CD4-positive, alpha-beta T cell (primary cell): ENCODE measurements at regions of chr11 and their contacts with region 1.

Region 1: GRCh38 chr11:11148104-11148509 is 204.9 kb downstream of the CSNK2A3 start:
- DNase-seq: peak in 13 of 14 experiments; percentile 27 to 73 (median 48)
- ATAC-seq: peak; percentile 13
- H3K4me3 ChIP-seq: no peak overlapping the region
- H3K4me3 Mint-ChIP-seq: peak overlapping the region; percentile 63
- H3K27ac ChIP-seq: peak overlapping the region in 1 of 2 donors; percentile 95
- H3K27ac Mint-ChIP-seq: peak overlapping the region; percentile 95
- H3K4me1 ChIP-seq: peaks cover 45% of the 10 kb centered on the region
- H3K4me1 Mint-ChIP-seq: peaks cover 74% of the 10 kb centered on the region
- H3K27me3 ChIP-seq: no peaks in the 10 kb centered on the region
- H3K27me3 Mint-ChIP-seq: no peaks in the 10 kb centered on the region
- CTCF ChIP-seq: no peak

Region 2: GRCh38 chr11:10866893-10867331 is 281.2 kb before region 1 on chr11:
- CTCF ChIA-PET with region 1: no interaction called
- POLR2A ChIA-PET with region 1: no interaction called
- intact Hi-C with region 1: loop called in 1 of 2 experiments (anchors 5 kb)
- DNase-seq: no peak
- ATAC-seq: no peak
- H3K4me3 ChIP-seq: no peak overlapping the region
- H3K4me3 Mint-ChIP-seq: no peak overlapping the region
- H3K27ac ChIP-seq: no peak overlapping the region
- H3K27ac Mint-ChIP-seq: no peak overlapping the region
- H3K4me1 ChIP-seq: no peaks in the 10 kb centered on the region
- H3K4me1 Mint-ChIP-seq: peaks cover 19% of the 10 kb centered on the region
- H3K27me3 ChIP-seq: no peaks in the 10 kb centered on the region
- H3K27me3 Mint-ChIP-seq: no peaks in the 10 kb centered on the region
- CTCF ChIP-seq: no peak

Region 3: GRCh38 chr11:11036848-11037732 is 111.0 kb before region 1 on chr11:
- CTCF ChIA-PET with region 1: interaction called, 15 read pairs
- POLR2A ChIA-PET with region 1: interaction called, 3 read pairs
- intact Hi-C with region 1: no loop called
- DNase-seq: peak in 8 of 14 experiments; percentile 11 to 86 (median 35)
- ATAC-seq: peak; percentile 93
- H3K4me3 ChIP-seq: no peak overlapping the region
- H3K4me3 Mint-ChIP-seq: no peak overlapping the region
- H3K27ac ChIP-seq: no peak overlapping the region
- H3K27ac Mint-ChIP-seq: peak overlapping the region; percentile 78
- H3K4me1 ChIP-seq: peaks cover 14% of the 10 kb centered on the region
- H3K4me1 Mint-ChIP-seq: peaks cover 22% of the 10 kb centered on the region
- H3K27me3 ChIP-seq: no peaks in the 10 kb centered on the region
- H3K27me3 Mint-ChIP-seq: no peaks in the 10 kb centered on the region
- CTCF ChIP-seq: peak; percentile 62

Region 4: DNA sequence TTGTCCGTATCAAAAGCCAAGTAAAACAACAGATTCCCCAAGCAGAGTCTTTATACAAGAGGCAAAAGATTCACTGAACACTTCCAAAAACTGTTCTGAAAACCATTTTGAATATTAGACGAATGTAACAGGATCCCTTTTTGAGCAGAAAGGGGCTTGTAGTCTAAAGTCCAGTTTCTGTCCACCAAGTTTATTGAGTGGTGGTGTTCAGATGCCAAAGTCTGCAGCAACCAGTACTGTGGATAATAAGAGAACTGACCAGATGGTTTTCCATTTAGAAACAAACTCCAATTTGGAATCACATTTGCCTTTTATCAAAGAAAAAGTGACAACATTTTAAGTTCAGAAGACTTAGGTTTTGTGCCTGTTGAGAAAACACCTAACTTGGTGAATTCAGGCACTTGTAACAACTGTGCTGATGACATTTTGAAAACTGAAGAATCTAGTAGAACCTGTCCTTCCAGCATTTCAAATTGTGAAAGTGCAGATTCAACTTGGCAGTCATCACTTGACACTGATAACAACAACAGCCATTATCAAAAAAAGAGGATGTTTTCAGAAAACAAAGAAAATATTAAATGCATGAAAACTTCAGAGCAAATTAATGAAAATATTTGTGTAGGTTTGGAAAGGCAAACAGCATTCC is 12.2 kb before region 1 on chr11:
- CTCF ChIA-PET with region 1: interaction called, 5 read pairs
- POLR2A ChIA-PET with region 1: interaction called, 38 read pairs
- intact Hi-C with region 1: no loop called
- DNase-seq: no peak
- ATAC-seq: no peak
- H3K4me3 ChIP-seq: no peak overlapping the region
- H3K4me3 Mint-ChIP-seq: no peak overlapping the region
- H3K27ac ChIP-seq: no peak overlapping the region
- H3K27ac Mint-ChIP-seq: no peak overlapping the region
- H3K4me1 ChIP-seq: peaks cover 5% of the 10 kb centered on the region
- H3K4me1 Mint-ChIP-seq: peaks cover 38% of the 10 kb centered on the region
- H3K27me3 ChIP-seq: no peaks in the 10 kb centered on the region
- H3K27me3 Mint-ChIP-seq: no peaks in the 10 kb centered on the region
- CTCF ChIP-seq: no peak

Region 5: GRCh38 chr11:11841723-11842420 is 693.8 kb after region 1 on chr11 and contains the start of gene USP47:
- CTCF ChIA-PET with region 1: no interaction called
- POLR2A ChIA-PET with region 1: interaction called, 3 read pairs
- intact Hi-C with region 1: loop called in 1 of 2 experiments (anchors 2 kb)
- DNase-seq: peak; percentile 92 to 97 (median 94)
- ATAC-seq: peak; percentile 69
- H3K4me3 ChIP-seq: peak within 1 kb of the TSS; percentile 87
- H3K4me3 Mint-ChIP-seq: no peak within 1 kb of the TSS
- H3K27ac ChIP-seq: peak within 1 kb of the TSS; percentile 91 to 99
- H3K27ac Mint-ChIP-seq: no peak within 1 kb of the TSS
- H3K4me1 ChIP-seq: peaks cover 19% of the 10 kb centered on the region
- H3K4me1 Mint-ChIP-seq: peaks cover 3% of the 10 kb centered on the region
- H3K27me3 ChIP-seq: peaks cover 0 to 5% of the 10 kb centered on the region in 2 experiments
- H3K27me3 Mint-ChIP-seq: peaks cover 16% of the 10 kb centered on the region
- CTCF ChIP-seq: peak; percentile 62
- total RNA-seq, gene USP47: 97.0 to 100 TPM